Transverse colon (tissue), 4 donors: ENCODE measurements at regions of chr22 and their contacts with region 1.

Region 1: GRCh38 chr22:19717691-19718455 is 3.6 kb downstream of the SEPTIN5 start:
- DNase-seq: peak; percentile 77
- H3K4me3 ChIP-seq: peak overlapping the region; percentile 32 to 71 (median 60)
- H3K27ac ChIP-seq: peak overlapping the region in 3 of 4 donors; percentile 41 to 72 (median 51)
- H3K4me1 ChIP-seq: peaks cover 6 to 36% (median 24%) of the 10 kb centered on the region in 4 donors
- H3K27me3 ChIP-seq: peaks cover 89% of the 10 kb centered on the region
- CTCF ChIP-seq: peak; percentile 49 to 98 (median 91)
- EP300 ChIP-seq: no peak
- POLR2A ChIP-seq: no peak

Region 2: DNA sequence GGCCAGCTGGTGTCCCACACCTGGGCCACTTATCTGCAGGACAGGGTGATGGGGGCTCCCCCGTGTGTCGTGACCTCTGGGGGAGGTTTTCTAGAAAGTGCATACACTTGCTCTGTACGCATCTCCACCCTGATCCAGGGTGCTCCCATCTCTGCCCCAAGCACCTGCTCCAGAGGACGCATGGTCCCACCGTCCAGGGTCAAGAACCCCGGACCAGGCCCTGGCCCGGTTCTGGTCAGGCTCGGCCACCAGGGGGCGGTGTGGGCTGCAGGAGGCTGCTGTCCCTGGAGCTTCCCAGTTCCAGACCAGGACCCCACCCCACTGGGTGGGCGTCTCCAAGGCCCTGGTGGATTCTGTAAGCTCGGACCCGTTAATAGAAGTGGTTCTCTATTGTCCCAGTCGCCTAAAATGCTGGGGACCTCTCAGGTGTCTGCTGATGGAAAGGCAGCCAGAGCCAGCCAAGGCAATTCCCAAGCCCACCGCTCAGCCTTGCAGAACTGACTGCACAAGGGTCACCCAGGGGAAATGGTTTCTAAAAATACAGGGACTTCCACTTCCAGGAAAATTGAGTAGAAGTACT is 38.3 kb before region 1 on chr22:
- in situ Hi-C with region 1: no loop called
- intact Hi-C with region 1: loop called (anchors 2 kb)
- DNase-seq: peak; percentile 27
- H3K4me3 ChIP-seq: no peak overlapping the region
- H3K27ac ChIP-seq: no peak overlapping the region
- H3K4me1 ChIP-seq: no peaks in the 10 kb centered on the region
- H3K27me3 ChIP-seq: peaks cover 42% of the 10 kb centered on the region
- CTCF ChIP-seq: peak; percentile 63 to 83 (median 80)
- EP300 ChIP-seq: no peak
- POLR2A ChIP-seq: no peak